ENCODE measurements at regions of chr4 and their contacts with region 1.

Region 1: GRCh38 chr4:99723612-99724011 is 66.0 kb upstream of the C4orf54 start:
- DNase-seq: no peak

Region 2: DNA sequence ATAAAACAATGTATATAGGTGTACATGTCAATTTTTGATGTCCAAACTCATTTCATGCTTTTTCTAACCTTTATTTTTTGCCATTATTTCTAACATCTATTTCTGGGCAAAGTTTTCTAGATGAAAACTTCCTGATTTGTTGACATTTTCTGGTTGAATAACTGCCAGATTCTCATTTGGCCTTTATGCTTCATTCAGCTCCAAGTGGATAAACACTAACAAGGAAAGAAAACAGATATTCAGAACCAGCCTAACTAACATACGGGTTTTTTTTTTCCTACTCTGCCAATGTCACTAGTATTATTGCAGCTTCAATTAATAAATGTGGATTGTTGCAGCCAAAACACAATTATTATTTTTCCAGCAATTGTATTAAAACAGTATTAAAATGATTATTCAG is 1513.3 kb before region 1 on chr4:
- intact Hi-C with region 1: no loop called
- DNase-seq: no peak

Region 3: GRCh38 chr4:99593781-99594636 is 129.6 kb before region 1 on chr4:
- intact Hi-C with region 1: no loop called
- DNase-seq: no peak

Region 4: GRCh38 chr4:99746443-99746842 is 22.8 kb after region 1 on chr4:
- intact Hi-C with region 1: loop called in 1 of 2 experiments (anchors 1 kb)
- DNase-seq: no peak